Left cardiac atrium (tissue), 4 donors: ENCODE measurements at regions of chr2 and their contacts with region 1.

Region 1: DNA sequence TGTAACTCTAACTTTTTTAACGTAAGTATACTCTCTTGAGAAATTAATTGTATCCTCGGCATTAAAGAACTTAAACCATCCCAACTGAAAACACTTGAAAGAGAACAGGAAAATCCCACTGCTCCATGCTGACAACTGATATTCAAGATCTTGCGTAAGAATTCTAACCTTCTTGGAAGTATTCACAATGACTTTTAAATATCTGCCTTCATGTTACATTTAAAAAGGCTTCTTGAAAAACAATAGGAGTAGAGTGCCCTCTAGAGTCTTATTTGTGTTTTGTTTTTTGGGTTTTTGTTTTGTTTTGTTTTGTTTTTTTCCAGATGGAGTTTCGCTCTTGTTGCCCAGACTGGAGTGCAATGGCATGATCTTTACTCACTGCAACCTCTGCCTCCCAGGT is 65.4 kb upstream of the DNAJC10 start:
- DNase-seq: no peak
- ATAC-seq: peak; percentile 67 to 80

Region 2: GRCh38 chr2:182047544-182047943 is 603.2 kb before region 1 on chr2:
- intact Hi-C with region 1: no loop called
- DNase-seq: no peak
- ATAC-seq: no peak

Region 3: DNA sequence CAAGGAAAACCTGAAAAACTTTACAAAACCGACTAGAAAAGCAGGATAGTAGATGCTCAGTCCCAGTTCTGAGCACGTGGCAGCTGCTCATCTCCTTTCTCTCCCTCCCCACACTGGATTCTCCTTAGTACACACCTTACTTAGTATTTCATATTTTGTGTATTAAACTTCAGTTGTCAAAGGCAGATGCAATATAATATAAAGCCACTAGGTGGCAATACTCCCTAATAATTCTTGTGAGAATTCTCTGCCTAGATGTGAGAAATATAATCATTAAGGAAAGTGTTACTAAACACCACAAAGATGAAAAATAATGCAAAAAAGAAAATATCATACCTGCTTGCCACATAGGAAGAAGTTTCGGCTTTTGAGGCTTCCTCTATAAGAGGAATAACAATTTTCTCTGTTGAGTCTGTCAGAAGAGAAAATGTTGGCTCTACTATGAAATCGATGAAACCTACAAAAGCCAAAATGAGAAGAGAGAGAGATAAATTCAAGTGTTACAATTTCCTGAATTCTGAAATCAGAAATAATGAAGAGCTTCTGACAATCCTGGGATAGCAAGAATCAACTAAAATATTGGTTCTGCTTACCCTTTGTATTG is 464.5 kb before region 1 on chr2:
- intact Hi-C with region 1: loop called (anchors 2 to 5 kb)
- DNase-seq: no peak
- ATAC-seq: no peak

Region 4: GRCh38 chr2:182240862-182241371 is 409.8 kb before region 1 on chr2:
- intact Hi-C with region 1: loop called in 1 of 2 experiments (anchors 5 kb)
- DNase-seq: peak; percentile 27
- ATAC-seq: peak in 1 of 2 donors; percentile 57

Region 5: GRCh38 chr2:182818541-182819324 is 168.0 kb after region 1 on chr2:
- intact Hi-C with region 1: no loop called
- DNase-seq: no peak
- ATAC-seq: no peak